Vagina (tissue), 2 donors: ENCODE measurements at regions of chr6 and their contacts with region 1.

Region 1: GRCh38 chr6:43070028-43070632 is 6.0 kb upstream of the PTK7 start:
- DNase-seq: no peak
- H3K4me3 ChIP-seq: no peak overlapping the region
- H3K27ac ChIP-seq: no peak overlapping the region
- H3K4me1 ChIP-seq: peaks cover 5% of the 10 kb centered on the region
- H3K27me3 ChIP-seq: no peaks in the 10 kb centered on the region
- CTCF ChIP-seq: peak in 1 of 3 experiments; percentile 32
- POLR2A ChIP-seq: no peak

Region 2: GRCh38 chr6:43129434-43130194 is 59.5 kb after region 1 on chr6:
- intact Hi-C with region 1: loop called (anchors 10 kb)
- DNase-seq: no peak
- H3K4me3 ChIP-seq: no peak overlapping the region
- H3K27ac ChIP-seq: no peak overlapping the region
- H3K4me1 ChIP-seq: peaks cover 36% of the 10 kb centered on the region
- H3K27me3 ChIP-seq: no peaks in the 10 kb centered on the region
- CTCF ChIP-seq: peak in 1 of 3 experiments; percentile 35
- POLR2A ChIP-seq: no peak

Region 3: GRCh38 chr6:43334466-43335095 is 264.5 kb after region 1 on chr6:
- intact Hi-C with region 1: no loop called
- DNase-seq: no peak
- H3K4me3 ChIP-seq: no peak overlapping the region
- H3K27ac ChIP-seq: no peak overlapping the region
- H3K4me1 ChIP-seq: no peaks in the 10 kb centered on the region
- H3K27me3 ChIP-seq: no peaks in the 10 kb centered on the region
- CTCF ChIP-seq: peak in 1 of 3 experiments; percentile 18
- POLR2A ChIP-seq: no peak